Psoas muscle (tissue), 8 donors: ENCODE measurements at regions of chr1 and their contacts with region 1.

Region 1: DNA sequence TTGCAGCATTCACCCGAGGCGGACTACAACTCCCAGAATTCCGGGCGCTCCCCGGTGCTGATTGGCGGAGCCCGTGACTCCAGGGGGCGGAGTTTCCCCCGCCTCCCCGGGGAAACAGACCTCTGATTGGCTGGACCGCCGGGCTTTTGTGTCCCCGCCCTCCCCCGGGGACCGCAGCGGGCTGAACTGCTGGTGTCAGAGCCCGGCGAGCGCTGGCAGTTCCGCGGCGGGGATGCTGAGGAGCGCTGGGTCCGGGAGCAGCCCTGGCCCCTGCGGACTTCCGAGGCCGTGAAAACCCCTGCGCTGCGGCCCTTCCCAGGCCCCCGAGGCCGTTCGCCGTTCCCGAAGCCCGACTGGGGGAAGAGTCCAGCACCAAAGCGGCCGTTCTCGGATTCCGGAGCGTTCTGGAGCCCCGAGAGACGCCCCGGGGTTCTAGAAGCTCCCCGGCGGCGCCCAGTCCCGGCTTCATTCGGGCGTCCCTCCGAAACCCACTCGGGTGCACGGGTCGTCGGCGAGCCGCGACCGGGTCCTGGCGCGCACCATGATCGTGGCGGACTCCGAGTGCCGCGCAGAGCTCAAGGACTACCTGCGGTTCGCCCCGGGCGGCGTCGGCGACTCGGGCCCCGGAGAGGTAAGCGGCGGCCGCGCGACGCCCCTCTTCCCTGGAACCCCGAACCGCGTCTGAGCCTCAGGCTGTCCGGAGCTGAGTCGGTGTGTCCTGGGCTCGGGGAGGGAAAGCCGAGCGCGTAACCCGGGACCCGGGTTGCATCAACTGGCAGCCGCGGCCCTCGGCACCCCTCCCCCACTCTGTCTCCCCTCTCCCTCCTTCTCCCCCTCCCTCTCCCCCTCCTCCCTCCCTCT is at the start of gene SESN2:
- DNase-seq: peak; percentile 100
- ATAC-seq: peak; percentile 96 to 98 (median 97)
- H3K4me3 ChIP-seq: peak within 1 kb of the TSS; percentile 96
- H3K27ac ChIP-seq: peak within 1 kb of the TSS; percentile 86
- H3K4me1 ChIP-seq: peaks cover 29% of the 10 kb centered on the region
- H3K27me3 ChIP-seq: no peaks in the 10 kb centered on the region
- CTCF ChIP-seq: no peak
- total RNA-seq, gene SESN2: 8.1 to 25.5 (median 12.2) TPM

Region 2: DNA sequence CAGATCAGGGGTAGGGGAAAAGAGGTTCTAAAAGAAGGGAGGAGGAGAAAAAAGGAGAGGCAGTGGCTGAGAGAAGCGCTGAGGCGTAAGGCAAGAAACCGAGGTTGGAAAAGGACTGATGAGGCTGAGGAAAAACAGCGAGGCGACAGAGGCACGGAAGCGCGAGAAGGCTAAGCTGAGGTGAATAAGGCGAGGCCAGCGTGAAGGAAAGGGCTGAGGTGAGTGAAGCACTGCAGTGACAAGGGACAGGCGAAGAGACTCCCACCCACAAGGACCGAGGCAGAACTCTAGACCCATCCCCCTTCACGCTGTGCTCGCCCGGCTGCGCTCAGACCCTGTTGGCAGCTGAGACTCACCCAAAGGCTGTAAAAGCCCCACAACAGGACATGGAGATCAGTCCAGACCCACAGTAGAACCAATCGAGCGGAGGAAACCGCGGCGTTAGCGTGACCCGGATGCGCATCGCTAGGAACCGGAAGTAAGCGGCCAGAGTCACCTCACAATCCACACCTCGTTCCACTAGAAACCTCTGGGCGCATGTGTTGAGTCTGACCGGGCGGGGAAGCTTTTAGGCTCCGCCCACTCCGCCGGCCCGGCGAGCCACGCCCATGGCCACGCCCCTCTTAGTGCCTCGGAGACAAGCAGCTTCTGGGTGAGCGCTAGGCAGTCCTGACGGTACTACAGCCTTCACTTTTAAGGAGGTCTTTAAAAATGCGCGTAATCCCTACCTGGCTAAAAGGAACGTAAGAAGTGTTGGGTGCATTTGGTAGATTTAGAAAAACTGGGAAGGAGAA is 171.2 kb before region 1 on chr1 and contains the start of gene EYA3:
- intact Hi-C with region 1: no loop called
- DNase-seq: peak; percentile 97 to 99
- ATAC-seq: peak; percentile 99 to 100 (median 100)
- H3K4me3 ChIP-seq: peak within 1 kb of the TSS; percentile 97
- H3K27ac ChIP-seq: peak within 1 kb of the TSS; percentile 95
- H3K4me1 ChIP-seq: peaks cover 38% of the 10 kb centered on the region
- H3K27me3 ChIP-seq: no peaks in the 10 kb centered on the region
- CTCF ChIP-seq: no peak
- total RNA-seq, gene EYA3: 13.1 to 15.3 (median 14.0) TPM

Region 3: DNA sequence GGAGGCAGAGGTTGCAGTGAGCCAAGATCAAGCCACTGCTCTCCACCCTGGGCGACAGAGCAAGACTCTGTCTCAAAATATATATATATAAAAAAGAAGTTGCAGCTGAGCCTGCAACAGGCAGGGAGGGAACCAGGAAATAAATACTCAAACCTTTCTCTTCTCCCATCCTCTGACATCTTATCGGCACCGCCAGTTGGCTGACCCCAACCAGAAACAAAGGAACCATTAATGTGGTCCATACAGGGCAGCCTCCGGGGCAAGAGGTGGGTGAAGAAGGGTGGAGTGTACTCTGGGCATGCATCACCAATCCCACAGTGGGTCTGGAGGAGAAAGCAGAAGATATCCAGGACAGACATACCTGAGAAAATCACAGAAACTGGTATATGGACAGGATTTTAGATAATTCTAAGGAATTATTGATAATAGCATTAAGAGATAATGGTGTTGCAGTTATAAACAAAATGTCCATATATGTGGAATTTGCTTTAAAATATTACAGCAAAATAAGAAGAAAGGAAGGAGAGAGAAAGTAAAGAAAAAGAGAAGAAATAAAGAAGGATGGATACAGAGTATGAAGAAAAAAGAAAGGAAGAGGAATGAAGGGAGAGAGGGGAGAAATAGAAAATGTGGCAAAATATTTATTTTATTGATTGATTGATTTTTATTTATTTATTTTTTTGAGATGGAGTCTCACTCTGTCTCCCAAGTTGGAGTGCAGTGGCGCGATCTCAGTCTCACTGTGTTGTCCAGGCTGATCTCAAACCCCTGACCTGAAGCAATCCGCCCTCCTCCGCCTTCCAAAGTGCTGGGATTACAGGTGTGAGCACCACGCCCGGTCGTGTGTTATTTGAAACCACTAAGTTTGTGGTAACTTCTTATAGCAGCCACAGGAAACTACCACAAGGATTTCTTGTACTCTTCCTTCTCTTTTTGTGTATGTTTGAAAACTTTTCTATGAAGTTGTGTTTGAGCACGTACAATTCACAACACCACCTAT is 78.9 kb before region 1 on chr1:
- intact Hi-C with region 1: no loop called
- DNase-seq: peak in 1 of 2 donors; percentile 36
- ATAC-seq: no peak
- H3K4me3 ChIP-seq: no peak overlapping the region
- H3K27ac ChIP-seq: no peak overlapping the region
- H3K4me1 ChIP-seq: no peaks in the 10 kb centered on the region
- H3K27me3 ChIP-seq: peaks cover 0 to 2% (median 0%) of the 10 kb centered on the region in 3 donors
- CTCF ChIP-seq: no peak

Region 4: DNA sequence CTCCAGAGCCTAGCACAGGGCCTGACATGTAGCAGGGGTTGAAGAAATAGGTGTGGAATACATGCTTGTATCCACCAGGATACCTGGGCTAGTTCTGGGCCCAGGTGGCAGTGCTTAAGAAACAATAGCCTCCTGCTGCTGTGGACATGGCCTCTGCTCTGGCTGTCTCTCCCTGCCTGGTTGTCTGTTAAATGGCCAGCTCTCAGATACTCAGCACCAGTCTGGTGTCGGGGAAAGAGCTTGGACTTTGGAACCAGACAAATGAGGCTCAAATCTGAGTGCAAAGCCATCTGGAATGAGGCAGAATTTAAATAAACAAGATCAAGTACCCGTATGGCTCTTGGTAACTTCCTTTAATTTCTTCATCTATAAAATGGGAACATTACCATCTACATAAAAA is 31.3 kb after region 1 on chr1:
- intact Hi-C with region 1: no loop called
- DNase-seq: no peak
- ATAC-seq: no peak
- H3K4me3 ChIP-seq: no peak overlapping the region
- H3K27ac ChIP-seq: no peak overlapping the region
- H3K4me1 ChIP-seq: no peaks in the 10 kb centered on the region
- H3K27me3 ChIP-seq: no peaks in the 10 kb centered on the region
- CTCF ChIP-seq: no peak

Region 5: DNA sequence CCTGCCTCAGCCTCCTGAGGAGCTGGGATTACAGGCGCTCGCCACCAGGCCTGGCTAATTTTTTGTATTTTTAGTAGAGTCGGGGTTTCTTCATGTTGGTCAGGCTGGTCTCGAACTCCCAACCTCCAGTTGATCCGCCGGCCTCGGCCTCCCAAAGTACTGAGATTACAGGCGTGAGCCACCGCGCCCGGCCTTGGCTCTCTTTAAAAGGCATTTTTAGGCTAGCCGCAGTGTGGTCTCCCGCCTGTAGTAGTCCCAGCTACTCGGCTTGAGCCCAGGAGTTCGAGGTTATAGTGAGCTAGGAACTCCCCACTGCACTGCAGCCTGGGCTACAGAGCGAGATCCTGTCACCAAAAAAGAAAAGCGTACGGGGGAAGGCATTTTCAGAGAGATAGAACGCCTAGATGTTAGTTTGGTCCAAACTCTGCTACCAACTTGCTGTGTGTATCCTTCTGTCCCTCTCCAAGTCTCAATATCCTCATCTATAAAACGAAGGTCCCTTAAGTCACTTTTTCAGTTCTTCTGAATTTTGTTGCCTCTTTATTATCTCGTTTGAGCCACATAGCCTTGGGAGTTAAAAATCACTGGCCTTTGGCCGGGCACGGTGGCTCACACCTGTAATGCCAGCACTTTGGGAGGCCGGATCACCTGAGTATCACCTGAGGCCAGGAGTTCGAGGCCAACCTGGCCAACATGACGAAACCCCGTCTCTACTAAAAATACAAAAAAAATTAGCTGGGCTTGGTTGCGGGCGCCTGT is 70.0 kb after region 1 on chr1:
- intact Hi-C with region 1: loop called in 1 of 2 experiments (anchors 5 kb)
- DNase-seq: peak; percentile 25 to 68
- ATAC-seq: peak; percentile 41 to 66 (median 46)
- H3K4me3 ChIP-seq: peak overlapping the region; percentile 80
- H3K27ac ChIP-seq: peak overlapping the region; percentile 93
- H3K4me1 ChIP-seq: peaks cover 5% of the 10 kb centered on the region
- H3K27me3 ChIP-seq: no peaks in the 10 kb centered on the region
- CTCF ChIP-seq: no peak

Region 6: GRCh38 chr1:28494737-28495136 is 235.2 kb after region 1 on chr1:
- intact Hi-C with region 1: loop called in 1 of 2 experiments (anchors 10 kb)
- DNase-seq: no peak
- ATAC-seq: no peak
- H3K4me3 ChIP-seq: no peak overlapping the region
- H3K27ac ChIP-seq: no peak overlapping the region
- H3K4me1 ChIP-seq: no peaks in the 10 kb centered on the region
- H3K27me3 ChIP-seq: no peaks in the 10 kb centered on the region
- CTCF ChIP-seq: no peak